Ascending aorta (tissue), 2 donors: ENCODE measurements at regions of chr3 and their contacts with region 1.

Region 1: GRCh38 chr3:135965506-135966270 is at the start of gene PPP2R3A:
- DNase-seq: peak; percentile 47 to 93
- H3K4me3 ChIP-seq: peak within 1 kb of the TSS; percentile 76 to 92
- H3K27ac ChIP-seq: peak within 1 kb of the TSS; percentile 94 to 95
- H3K4me1 ChIP-seq: peaks cover 0 to 16% of the 10 kb centered on the region in 2 donors
- H3K27me3 ChIP-seq: no peaks in the 10 kb centered on the region
- CTCF ChIP-seq: no peak
- total RNA-seq, gene PPP2R3A: 10.5 TPM

Region 2: DNA sequence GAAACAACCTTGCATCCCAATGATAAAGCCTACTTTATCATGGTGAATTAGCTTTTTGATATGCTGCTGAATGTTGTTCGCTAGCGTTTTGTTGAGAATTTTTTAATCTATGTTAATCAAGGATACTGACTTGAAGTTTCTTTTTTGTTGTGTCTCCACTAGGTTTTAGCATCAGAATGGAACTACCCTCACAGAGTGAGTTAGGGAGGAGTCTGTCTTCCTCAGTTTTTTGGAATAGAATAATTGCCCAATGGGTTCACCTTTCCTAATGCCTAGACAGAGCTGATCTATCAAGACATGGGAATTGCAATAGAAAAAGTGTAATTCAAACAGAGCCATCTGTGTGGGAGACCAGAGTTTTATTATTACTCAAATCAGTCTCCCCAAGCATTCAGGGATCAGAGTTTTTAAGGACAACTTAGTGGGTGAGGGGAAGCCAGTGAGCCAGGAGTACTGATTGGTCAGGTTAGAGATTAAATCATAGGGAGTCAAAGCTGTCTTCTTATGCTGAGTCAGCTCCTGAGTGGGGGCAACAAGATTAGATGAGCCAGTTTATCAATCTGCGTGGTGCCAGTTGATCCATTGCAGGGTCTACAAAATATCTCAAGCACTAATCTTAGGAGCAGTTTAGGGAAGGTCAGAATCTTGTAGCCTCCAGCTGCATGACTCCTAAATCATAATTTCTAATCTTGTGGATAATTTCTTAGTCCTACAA is 237.5 kb before region 1 on chr3:
- intact Hi-C with region 1: no loop called
- DNase-seq: no peak
- H3K4me3 ChIP-seq: no peak overlapping the region
- H3K27ac ChIP-seq: no peak overlapping the region
- H3K4me1 ChIP-seq: no peaks in the 10 kb centered on the region
- H3K27me3 ChIP-seq: no peaks in the 10 kb centered on the region
- CTCF ChIP-seq: no peak

Region 3: DNA sequence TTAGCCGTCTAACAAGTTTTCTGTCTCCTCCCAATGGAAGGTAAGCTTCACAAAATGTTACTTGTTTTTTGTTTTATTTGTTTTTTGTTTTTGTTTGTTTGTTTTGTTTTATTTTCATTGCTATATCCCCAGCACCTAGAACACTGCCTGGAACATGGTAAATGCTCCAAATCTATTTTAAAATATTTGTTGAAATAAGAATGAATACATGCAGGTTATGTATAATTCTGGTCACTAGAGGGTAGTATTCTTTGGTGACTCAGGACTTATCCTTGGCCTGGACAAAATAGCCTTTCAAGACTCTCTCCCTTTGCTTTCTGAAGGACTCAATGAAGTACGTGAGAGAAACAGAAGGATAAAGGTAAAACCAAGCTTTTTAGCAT is 47.1 kb before region 1 on chr3:
- intact Hi-C with region 1: loop called (anchors 5 kb)
- DNase-seq: no peak
- H3K4me3 ChIP-seq: no peak overlapping the region
- H3K27ac ChIP-seq: no peak overlapping the region
- H3K4me1 ChIP-seq: no peaks in the 10 kb centered on the region
- H3K27me3 ChIP-seq: no peaks in the 10 kb centered on the region
- CTCF ChIP-seq: peak; percentile 36 to 62 (median 38)

Region 4: GRCh38 chr3:135997554-135998320 is 32.0 kb after region 1 on chr3:
- intact Hi-C with region 1: no loop called
- DNase-seq: no peak
- H3K4me3 ChIP-seq: no peak overlapping the region
- H3K27ac ChIP-seq: no peak overlapping the region
- H3K4me1 ChIP-seq: peaks cover 0 to 8% of the 10 kb centered on the region in 2 donors
- H3K27me3 ChIP-seq: no peaks in the 10 kb centered on the region
- CTCF ChIP-seq: no peak

Region 5: GRCh38 chr3:136022529-136023263 is 57.0 kb after region 1 on chr3:
- intact Hi-C with region 1: loop called (anchors 5 kb)
- DNase-seq: no peak
- H3K4me3 ChIP-seq: no peak overlapping the region
- H3K27ac ChIP-seq: peak overlapping the region in 1 of 2 donors; percentile 22
- H3K4me1 ChIP-seq: peaks cover 5 to 8% of the 10 kb centered on the region in 2 donors
- H3K27me3 ChIP-seq: no peaks in the 10 kb centered on the region
- CTCF ChIP-seq: no peak

Region 6: DNA sequence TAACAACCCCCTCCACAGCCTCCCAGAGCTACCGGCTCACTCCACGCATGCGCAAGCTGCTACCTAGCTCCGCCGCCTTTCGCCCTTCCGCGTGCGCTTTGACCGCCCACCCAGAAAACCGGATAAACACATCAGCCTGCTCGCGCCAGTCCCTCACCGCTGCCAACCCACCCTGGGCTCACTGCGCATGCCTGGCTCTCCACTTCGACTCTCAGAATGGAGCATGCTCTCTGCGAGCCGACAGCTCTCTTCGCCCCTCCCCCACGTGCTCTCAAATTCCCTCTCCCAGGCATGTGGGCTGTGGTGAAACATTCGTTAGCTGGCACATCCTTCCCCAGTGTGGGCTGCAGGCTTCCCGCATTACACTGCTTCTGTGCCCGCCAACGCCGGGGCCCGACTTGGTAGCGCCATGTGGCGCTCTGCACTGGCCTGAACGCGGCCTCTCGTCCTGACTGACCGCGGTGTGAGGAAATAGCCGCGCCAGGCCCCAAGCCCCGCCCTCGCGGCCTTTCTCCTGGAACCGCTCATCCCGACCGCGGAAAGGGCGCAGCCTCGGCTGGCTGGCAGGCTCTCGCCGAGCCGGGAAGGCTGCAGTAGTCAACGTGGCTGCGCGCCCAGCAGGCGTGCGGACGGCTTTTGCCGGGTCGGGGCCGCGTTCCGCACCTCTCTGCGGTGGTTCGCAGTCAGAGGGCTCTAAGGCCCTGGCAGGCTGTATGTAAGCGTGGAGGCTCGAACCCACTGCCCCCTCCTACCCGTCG is 230.9 kb after region 1 on chr3:
- intact Hi-C with region 1: loop called (anchors 2 kb)
- DNase-seq: peak; percentile 96 to 99
- H3K4me3 ChIP-seq: peak overlapping the region; percentile 69 to 93
- H3K27ac ChIP-seq: peak overlapping the region; percentile 99 to 100
- H3K4me1 ChIP-seq: peaks cover 3 to 18% of the 10 kb centered on the region in 2 donors
- H3K27me3 ChIP-seq: no peaks in the 10 kb centered on the region
- CTCF ChIP-seq: no peak

Region 7: GRCh38 chr3:136861890-136862616 is 896.4 kb after region 1 on chr3 and contains the start of gene NCK1:
- intact Hi-C with region 1: loop called (anchors 10 kb)
- DNase-seq: peak; percentile 97 to 99
- H3K4me3 ChIP-seq: peak within 1 kb of the TSS; percentile 78 to 85
- H3K27ac ChIP-seq: peak within 1 kb of the TSS; percentile 91 to 92
- H3K4me1 ChIP-seq: peaks cover 0 to 9% of the 10 kb centered on the region in 2 donors
- H3K27me3 ChIP-seq: no peaks in the 10 kb centered on the region
- CTCF ChIP-seq: peak in 2 of 3 experiments; percentile 14 to 17
- total RNA-seq, gene NCK1: 45.6 TPM